ENCODE measurements at regions of chr10 and their contacts with region 1.

Region 1: GRCh38 chr10:93293999-93294398 is 188.1 kb downstream of the MYOF start:
- DNase-seq: no peak
- ATAC-seq: no peak
- H3K4me3 ChIP-seq: no peak overlapping the region
- H3K27ac ChIP-seq: no peak overlapping the region
- H3K4me1 ChIP-seq: no peaks in the 10 kb centered on the region
- H3K27me3 ChIP-seq: no peaks in the 10 kb centered on the region; a peak in 1 of 5 replicates
- CTCF ChIP-seq: no peak
- EP300 ChIP-seq: no peak
- POLR2A ChIP-seq: no peak
- RAD21 ChIP-seq: no peak

Region 2: DNA sequence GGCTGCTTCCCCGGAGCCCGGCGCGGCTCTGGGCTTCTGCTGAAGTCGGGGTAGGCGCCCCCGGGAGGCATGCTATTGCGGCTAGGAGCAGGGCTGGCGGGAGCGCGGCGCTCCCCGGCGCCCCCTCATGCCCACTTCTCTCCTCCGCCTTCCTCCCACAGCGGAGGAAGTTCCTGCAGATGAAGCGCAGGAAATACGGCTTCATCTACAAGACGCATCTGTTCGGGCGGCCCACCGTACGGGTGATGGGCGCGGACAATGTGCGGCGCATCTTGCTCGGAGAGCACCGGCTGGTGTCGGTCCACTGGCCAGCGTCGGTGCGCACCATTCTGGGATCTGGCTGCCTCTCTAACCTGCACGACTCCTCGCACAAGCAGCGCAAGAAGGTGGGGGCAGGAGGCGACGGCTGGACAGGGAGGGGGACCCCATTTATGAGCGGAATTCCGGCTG is 219.8 kb before region 1 on chr10:
- CTCF ChIA-PET with region 1: interaction called, 20 read pairs
- POLR2A ChIA-PET with region 1: no interaction called
- in situ Hi-C with region 1: loop called (anchors 10 kb)
- intact Hi-C with region 1: no loop called
- DNase-seq: no peak
- ATAC-seq: peak; percentile 39
- H3K4me3 ChIP-seq: peak overlapping the region; percentile 56 to 77 (median 58); a peak in 5 of 6 replicates
- H3K27ac ChIP-seq: no peak overlapping the region
- H3K4me1 ChIP-seq: peaks cover 36% of the 10 kb centered on the region
- H3K27me3 ChIP-seq: peaks cover 11 to 56% of the 10 kb centered on the region in 2 experiments; a peak in 4 of 5 replicates
- CTCF ChIP-seq: peak; percentile 47
- EP300 ChIP-seq: no peak
- POLR2A ChIP-seq: no peak
- RAD21 ChIP-seq: no peak

Measured in HepG2 (cell line).